Activated CD4-positive, alpha-beta T cell treated with anti-CD3 and anti-CD28 coated beads for 36 hours (primary cell): ENCODE measurements at regions of chr1 and their contacts with region 1.

Region 1: GRCh38 chr1:220733090-220733601 is 15.0 kb upstream of the MTARC2 start:
- DNase-seq: peak; percentile 88
- ATAC-seq: peak; percentile 93
- H3K4me3 Mint-ChIP-seq: no peak overlapping the region
- H3K27ac Mint-ChIP-seq: peak overlapping the region; percentile 29
- H3K4me1 Mint-ChIP-seq: peaks cover 8% of the 10 kb centered on the region
- H3K27me3 Mint-ChIP-seq: peaks cover 3% of the 10 kb centered on the region

Region 2: DNA sequence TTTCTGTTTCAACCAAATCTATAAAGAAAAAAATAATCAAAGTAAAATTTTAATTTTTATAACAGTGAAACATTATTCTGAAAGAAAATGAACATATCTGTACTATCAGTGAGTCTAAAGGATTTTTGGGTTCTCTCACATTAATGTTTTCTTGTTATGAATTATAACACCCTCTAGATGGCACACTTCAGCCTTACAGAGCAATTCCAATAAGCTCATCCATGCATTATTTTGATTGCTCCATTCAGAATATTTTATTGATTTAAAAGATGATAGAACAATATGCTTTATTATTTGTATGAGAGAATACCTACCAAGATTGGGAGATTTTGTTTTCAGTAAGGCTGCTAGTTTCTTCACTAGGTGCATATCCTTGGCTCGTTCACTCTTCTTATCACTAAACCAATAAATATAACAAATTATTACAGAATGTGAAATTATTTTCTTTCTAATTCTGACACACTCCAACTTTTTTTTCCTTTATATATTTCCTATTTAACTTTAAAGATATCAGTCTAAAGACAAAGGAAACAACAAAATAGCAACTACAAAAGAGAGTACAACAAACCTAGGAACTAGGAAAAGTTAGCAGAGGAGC is 543.3 kb before region 1 on chr1:
- CTCF ChIA-PET with region 1: interaction called, 4 read pairs
- POLR2A ChIA-PET with region 1: no interaction called
- intact Hi-C with region 1: loop called in 1 of 2 experiments (anchors 1 kb)
- DNase-seq: no peak
- ATAC-seq: no peak
- H3K4me3 Mint-ChIP-seq: no peak overlapping the region
- H3K27ac Mint-ChIP-seq: no peak overlapping the region
- H3K4me1 Mint-ChIP-seq: no peaks in the 10 kb centered on the region
- H3K27me3 Mint-ChIP-seq: no peaks in the 10 kb centered on the region

Region 3: DNA sequence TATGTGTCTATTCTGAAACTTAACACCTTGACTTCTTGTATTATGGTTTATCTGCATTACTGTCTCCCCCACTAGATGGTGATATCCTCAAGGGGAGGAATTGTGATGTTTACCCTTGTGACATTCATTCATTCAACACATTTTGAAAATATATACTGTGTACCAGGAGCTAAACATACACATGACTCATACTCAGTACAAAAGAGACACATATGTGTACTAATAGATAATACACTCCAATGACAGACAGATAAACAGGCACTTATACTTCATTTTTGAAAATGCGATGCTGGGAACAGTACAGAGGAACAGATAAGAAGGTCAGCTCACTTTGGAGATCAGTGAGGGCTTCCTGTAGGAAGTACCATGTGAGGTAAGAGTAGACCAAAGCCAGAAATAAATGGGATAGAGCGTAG is 452.0 kb before region 1 on chr1:
- CTCF ChIA-PET with region 1: interaction called, 11 read pairs
- POLR2A ChIA-PET with region 1: no interaction called
- intact Hi-C with region 1: no loop called
- DNase-seq: no peak
- ATAC-seq: no peak
- H3K4me3 Mint-ChIP-seq: no peak overlapping the region
- H3K27ac Mint-ChIP-seq: no peak overlapping the region
- H3K4me1 Mint-ChIP-seq: no peaks in the 10 kb centered on the region
- H3K27me3 Mint-ChIP-seq: peaks cover 7% of the 10 kb centered on the region

Region 4: GRCh38 chr1:220527908-220528678 is 205.1 kb before region 1 on chr1 and contains the start of gene MARK1:
- CTCF ChIA-PET with region 1: interaction called, 4 read pairs
- POLR2A ChIA-PET with region 1: no interaction called
- intact Hi-C with region 1: loop called in 1 of 2 experiments (anchors 2 kb)
- DNase-seq: peak; percentile 41
- ATAC-seq: peak; percentile 67
- H3K4me3 Mint-ChIP-seq: peak within 1 kb of the TSS; percentile 76
- H3K27ac Mint-ChIP-seq: peak within 1 kb of the TSS; percentile 42
- H3K4me1 Mint-ChIP-seq: peaks cover 9% of the 10 kb centered on the region
- H3K27me3 Mint-ChIP-seq: peaks cover 62% of the 10 kb centered on the region
- total RNA-seq, gene MARK1: not detected

Region 5: DNA sequence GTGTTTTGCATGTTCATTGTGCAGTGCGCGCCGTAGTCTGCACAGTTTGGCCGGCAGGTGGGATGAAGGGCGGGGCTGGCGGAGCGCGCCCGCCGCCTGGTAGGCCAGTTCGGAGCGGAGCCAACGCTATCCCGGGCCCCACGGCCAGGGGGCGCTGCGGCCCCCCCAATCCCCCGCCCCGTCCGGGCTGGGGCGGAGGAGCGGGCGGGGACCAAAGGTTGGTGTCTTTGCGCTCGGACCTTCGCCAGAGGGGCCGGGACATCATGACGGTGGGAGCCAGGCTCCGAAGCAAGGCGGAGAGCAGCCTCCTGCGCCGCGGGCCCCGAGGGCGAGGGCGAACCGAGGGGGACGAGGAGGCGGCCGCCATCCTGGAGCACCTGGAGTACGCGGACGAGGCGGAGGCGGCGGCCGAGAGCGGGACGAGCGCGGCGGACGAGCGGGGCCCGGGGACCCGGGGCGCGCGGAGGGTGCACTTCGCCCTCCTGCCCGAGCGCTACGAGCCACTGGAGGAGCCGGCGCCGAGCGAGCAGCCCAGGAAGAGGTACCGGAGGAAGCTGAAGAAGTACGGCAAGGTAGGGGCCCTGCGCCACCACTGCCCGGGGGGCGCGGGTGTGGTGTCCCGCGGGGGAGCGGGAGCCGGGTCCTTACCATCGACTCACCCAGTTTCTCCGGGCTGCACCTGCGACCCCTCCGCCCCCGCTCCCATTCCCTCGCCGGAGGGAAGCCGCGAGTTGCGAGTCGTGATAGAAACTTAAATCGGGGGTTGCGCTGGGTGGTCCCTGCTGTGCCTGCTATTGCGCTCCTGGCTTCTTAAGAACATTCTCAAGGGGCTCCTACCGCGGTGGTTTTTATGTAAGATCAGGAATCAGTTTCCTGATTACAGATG is 42.8 kb before region 1 on chr1 and contains the start of gene C1orf115:
- CTCF ChIA-PET with region 1: interaction called, 12 read pairs
- POLR2A ChIA-PET with region 1: no interaction called
- intact Hi-C with region 1: loop called (anchors 1 to 2 kb)
- DNase-seq: peak; percentile 85
- ATAC-seq: peak; percentile 96
- H3K4me3 Mint-ChIP-seq: peak within 1 kb of the TSS; percentile 71
- H3K27ac Mint-ChIP-seq: no peak within 1 kb of the TSS
- H3K4me1 Mint-ChIP-seq: peaks cover 4% of the 10 kb centered on the region
- H3K27me3 Mint-ChIP-seq: peaks cover 12% of the 10 kb centered on the region
- total RNA-seq, gene C1orf115: 0.63 to 0.78 TPM

Region 6: GRCh38 chr1:221141606-221142285 is 408.6 kb after region 1 on chr1:
- CTCF ChIA-PET with region 1: no interaction called
- POLR2A ChIA-PET with region 1: no interaction called
- intact Hi-C with region 1: no loop called
- DNase-seq: no peak
- ATAC-seq: no peak
- H3K4me3 Mint-ChIP-seq: no peak overlapping the region
- H3K27ac Mint-ChIP-seq: no peak overlapping the region
- H3K4me1 Mint-ChIP-seq: no peaks in the 10 kb centered on the region
- H3K27me3 Mint-ChIP-seq: peaks cover 2% of the 10 kb centered on the region